PC-9 (cell line): ENCODE measurements at regions of chr1 and their contacts with region 1.

Region 1: GRCh38 chr1:172976222-172977041 is 74.3 kb downstream of the TNFSF18 start:
- DNase-seq: peak; percentile 24 to 61
- H3K4me3 ChIP-seq: no peak overlapping the region
- H3K27ac ChIP-seq: peak overlapping the region; percentile 34; the same call in 1 of the 2 replicates
- H3K4me1 ChIP-seq: peaks cover 36% of the 10 kb centered on the region
- H3K27me3 ChIP-seq: no peaks in the 10 kb centered on the region
- CTCF ChIP-seq: no peak

Region 2: DNA sequence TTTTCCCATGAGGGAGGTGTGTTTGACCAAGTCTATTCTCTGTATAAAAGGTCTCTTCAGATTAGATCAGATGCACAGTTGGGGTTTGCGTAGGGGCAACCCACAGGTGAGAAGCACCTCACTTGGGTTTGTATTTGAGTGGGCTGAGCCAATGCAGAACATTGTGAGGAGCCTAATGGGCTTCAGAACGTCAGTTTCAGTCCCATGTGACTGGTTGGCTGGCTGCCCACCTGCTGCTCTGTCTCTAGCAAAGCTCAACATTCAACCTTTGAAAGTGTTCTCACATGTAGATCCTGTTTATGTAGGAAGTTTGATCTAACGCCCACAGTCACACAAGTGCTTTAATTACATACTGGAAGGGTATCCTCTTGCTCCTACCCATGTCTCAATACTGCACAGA is 212.1 kb before region 1 on chr1:
- CTCF ChIA-PET with region 1: interaction called, 12 read pairs
- POLR2A ChIA-PET with region 1: no interaction called
- intact Hi-C with region 1: no loop called
- DNase-seq: no peak
- H3K4me3 ChIP-seq: no peak overlapping the region
- H3K27ac ChIP-seq: no peak overlapping the region
- H3K4me1 ChIP-seq: 0 out of 2 replicates have a peak, but pooled peaks cover 4% of the 10 kb centered on the region
- H3K27me3 ChIP-seq: no peaks in the 10 kb centered on the region
- CTCF ChIP-seq: no peak

Region 3: GRCh38 chr1:173002891-173003838 is 26.7 kb after region 1 on chr1:
- CTCF ChIA-PET with region 1: no interaction called
- POLR2A ChIA-PET with region 1: no interaction called
- intact Hi-C with region 1: no loop called
- DNase-seq: no peak
- H3K4me3 ChIP-seq: no peak overlapping the region
- H3K27ac ChIP-seq: no peak overlapping the region
- H3K4me1 ChIP-seq: no peaks in the 10 kb centered on the region
- H3K27me3 ChIP-seq: no peaks in the 10 kb centered on the region
- CTCF ChIP-seq: no peak